Aorta (tissue), 5 donors: ENCODE measurements at regions of chr1 and their contacts with region 1.

Region 1: DNA sequence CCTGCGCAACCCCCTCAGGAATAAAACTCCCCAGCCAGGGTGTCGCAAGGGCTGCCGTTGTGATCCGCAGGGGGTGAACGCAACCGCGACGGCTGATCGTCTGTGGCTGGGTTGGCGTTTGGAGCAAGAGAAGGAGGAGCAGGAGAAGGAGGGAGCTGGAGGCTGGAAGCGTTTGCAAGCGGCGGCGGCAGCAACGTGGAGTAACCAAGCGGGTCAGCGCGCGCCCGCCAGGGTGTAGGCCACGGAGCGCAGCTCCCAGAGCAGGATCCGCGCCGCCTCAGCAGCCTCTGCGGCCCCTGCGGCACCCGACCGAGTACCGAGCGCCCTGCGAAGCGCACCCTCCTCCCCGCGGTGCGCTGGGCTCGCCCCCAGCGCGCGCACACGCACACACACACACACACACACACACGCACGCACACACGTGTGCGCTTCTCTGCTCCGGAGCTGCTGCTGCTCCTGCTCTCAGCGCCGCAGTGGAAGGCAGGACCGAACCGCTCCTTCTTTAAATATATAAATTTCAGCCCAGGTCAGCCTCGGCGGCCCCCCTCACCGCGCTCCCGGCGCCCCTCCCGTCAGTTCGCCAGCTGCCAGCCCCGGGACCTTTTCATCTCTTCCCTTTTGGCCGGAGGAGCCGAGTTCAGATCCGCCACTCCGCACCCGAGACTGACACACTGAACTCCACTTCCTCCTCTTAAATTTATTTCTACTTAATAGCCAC is 696 bp downstream of the TGFB2 start:
- DNase-seq: peak; percentile 82 to 89
- ATAC-seq: peak; percentile 84
- H3K4me3 ChIP-seq: peak overlapping the region; percentile 90 to 92
- H3K27ac ChIP-seq: peak overlapping the region; percentile 63 to 96
- H3K4me1 ChIP-seq: peaks cover 0 to 2% of the 10 kb centered on the region in 2 donors
- H3K27me3 ChIP-seq: no peaks in the 10 kb centered on the region

Region 2: GRCh38 chr1:218459878-218460711 is 114.3 kb after region 1 on chr1:
- intact Hi-C with region 1: loop called in 1 of 2 experiments (anchors 5 kb)
- DNase-seq: peak in 1 of 2 donors; percentile 62
- ATAC-seq: peak; percentile 89
- H3K4me3 ChIP-seq: no peak overlapping the region
- H3K27ac ChIP-seq: peak overlapping the region; percentile 81 to 100
- H3K4me1 ChIP-seq: peaks cover 2 to 4% of the 10 kb centered on the region in 2 donors
- H3K27me3 ChIP-seq: no peaks in the 10 kb centered on the region

Region 3: DNA sequence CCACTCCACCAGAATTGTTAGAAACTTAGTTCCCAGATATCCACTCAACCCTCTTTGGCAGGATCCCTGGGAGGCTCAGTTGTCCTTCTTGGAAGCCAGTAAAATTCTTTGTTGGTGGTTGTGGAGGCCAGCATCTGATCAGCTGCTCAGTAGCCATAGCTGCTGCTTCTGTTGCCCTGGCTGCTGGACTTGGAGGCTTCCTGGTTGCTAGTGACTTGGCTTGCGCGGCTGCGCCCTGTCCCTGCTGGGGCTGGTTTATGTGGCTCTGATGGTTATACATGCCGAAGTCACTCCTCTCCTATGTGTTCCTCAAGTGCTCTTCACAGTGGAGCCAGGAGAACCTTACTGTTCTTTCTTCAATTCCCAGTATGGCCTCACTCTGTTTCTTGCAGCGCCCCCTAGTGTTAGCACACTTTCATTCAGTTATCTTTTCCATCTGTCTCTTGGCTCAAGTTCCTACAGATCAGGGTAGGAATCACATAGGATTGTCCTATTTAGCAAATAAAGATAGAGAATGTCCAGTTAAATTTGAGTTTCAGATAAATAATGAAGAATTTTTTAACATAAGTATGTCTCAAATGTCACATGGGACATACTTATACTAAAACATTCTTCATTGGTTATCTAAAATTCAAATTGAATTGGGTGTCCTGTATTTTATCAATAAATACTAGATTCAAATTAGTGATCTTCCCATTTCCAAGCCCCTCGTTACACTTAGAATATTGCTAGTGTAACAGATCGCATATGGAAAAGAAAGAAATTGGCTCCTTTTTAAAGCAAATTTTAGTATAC is 175.7 kb after region 1 on chr1:
- intact Hi-C with region 1: loop called in 1 of 2 experiments (anchors 5 kb)
- DNase-seq: peak in 1 of 2 donors; percentile 63
- ATAC-seq: peak; percentile 71
- H3K4me3 ChIP-seq: no peak overlapping the region
- H3K27ac ChIP-seq: no peak overlapping the region
- H3K4me1 ChIP-seq: no peaks in the 10 kb centered on the region
- H3K27me3 ChIP-seq: no peaks in the 10 kb centered on the region

Region 4: GRCh38 chr1:218823291-218823900 is 477.6 kb after region 1 on chr1:
- intact Hi-C with region 1: loop called in 1 of 2 experiments (anchors 5 kb)
- DNase-seq: no peak
- ATAC-seq: peak; percentile 71
- H3K4me3 ChIP-seq: no peak overlapping the region
- H3K27ac ChIP-seq: peak overlapping the region in 1 of 2 donors; percentile 33
- H3K4me1 ChIP-seq: peaks cover 0 to 5% of the 10 kb centered on the region in 2 donors
- H3K27me3 ChIP-seq: no peaks in the 10 kb centered on the region

Region 5: GRCh38 chr1:219173758-219174588 is 828.1 kb after region 1 on chr1 and contains the start of gene LYPLAL1:
- intact Hi-C with region 1: loop called in 1 of 2 experiments (anchors 5 kb)
- DNase-seq: peak; percentile 94 to 97
- ATAC-seq: peak; percentile 97
- H3K4me3 ChIP-seq: peak within 1 kb of the TSS; percentile 36 to 66
- H3K27ac ChIP-seq: peak within 1 kb of the TSS; percentile 73 to 79
- H3K4me1 ChIP-seq: peaks cover 4 to 10% of the 10 kb centered on the region in 2 donors
- H3K27me3 ChIP-seq: no peaks in the 10 kb centered on the region
- total RNA-seq, gene LYPLAL1: 35.1 to 47.0 TPM

Region 6: GRCh38 chr1:219304227-219305226 is 958.7 kb after region 1 on chr1:
- intact Hi-C with region 1: loop called in 1 of 2 experiments (anchors 10 kb)
- DNase-seq: peak; percentile 81 to 89
- ATAC-seq: peak; percentile 71
- H3K4me3 ChIP-seq: peak overlapping the region; percentile 28 to 37
- H3K27ac ChIP-seq: peak overlapping the region; percentile 80 to 97
- H3K4me1 ChIP-seq: peaks cover 0 to 3% of the 10 kb centered on the region in 2 donors
- H3K27me3 ChIP-seq: no peaks in the 10 kb centered on the region